ENCODE measurements at regions of chr1 and their contacts with region 1.

Region 1: GRCh38 chr1:58652651-58653184 is 47.1 kb downstream of the MYSM1 start:
- DNase-seq: peak; percentile 75
- H3K4me3 ChIP-seq: no peak overlapping the region
- H3K27ac ChIP-seq: no peak overlapping the region
- H3K4me1 ChIP-seq: peaks cover 3% of the 10 kb centered on the region
- H3K27me3 ChIP-seq: no peaks in the 10 kb centered on the region
- CTCF ChIP-seq: peak; percentile 76 to 81

Region 2: DNA sequence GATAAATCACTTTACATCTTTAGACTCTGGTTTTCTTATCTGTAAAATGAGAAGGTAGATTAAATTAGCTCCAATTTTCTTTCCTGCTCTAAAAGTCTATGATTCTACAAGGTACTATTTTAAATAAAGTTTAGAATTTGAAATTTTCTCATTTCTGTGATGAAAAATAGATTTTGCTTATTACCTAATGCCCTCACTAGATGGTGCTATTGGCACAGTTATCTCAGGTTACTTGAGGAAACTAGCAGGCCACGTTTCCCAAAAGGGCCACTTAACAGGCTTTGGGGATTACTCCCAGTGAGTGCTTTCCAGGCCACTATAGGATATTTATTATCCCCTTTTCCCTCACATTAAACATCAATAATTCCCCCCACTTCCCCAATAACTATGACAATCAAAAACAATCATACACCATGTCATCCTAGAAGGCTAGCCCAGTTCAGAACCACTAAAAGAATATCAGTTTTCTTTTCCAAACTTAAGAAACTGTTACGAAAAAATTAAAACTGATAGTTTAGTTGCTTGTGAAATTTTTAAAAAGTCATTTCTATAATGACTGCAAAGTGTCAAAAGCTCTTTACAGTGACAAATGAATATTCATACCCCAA is 136.8 kb before region 1 on chr1:
- CTCF ChIA-PET with region 1: interaction called, 5 read pairs
- dilution Hi-C with region 1: no loop called
- in situ Hi-C with region 1: loop called (anchors 5 kb)
- intact Hi-C with region 1: loop called (anchors 1 kb)
- DNase-seq: peak; percentile 51
- H3K4me3 ChIP-seq: no peak overlapping the region
- H3K27ac ChIP-seq: no peak overlapping the region
- H3K4me1 ChIP-seq: no peaks in the 10 kb centered on the region
- H3K27me3 ChIP-seq: no peaks in the 10 kb centered on the region
- CTCF ChIP-seq: peak; percentile 46 to 60

Region 3: DNA sequence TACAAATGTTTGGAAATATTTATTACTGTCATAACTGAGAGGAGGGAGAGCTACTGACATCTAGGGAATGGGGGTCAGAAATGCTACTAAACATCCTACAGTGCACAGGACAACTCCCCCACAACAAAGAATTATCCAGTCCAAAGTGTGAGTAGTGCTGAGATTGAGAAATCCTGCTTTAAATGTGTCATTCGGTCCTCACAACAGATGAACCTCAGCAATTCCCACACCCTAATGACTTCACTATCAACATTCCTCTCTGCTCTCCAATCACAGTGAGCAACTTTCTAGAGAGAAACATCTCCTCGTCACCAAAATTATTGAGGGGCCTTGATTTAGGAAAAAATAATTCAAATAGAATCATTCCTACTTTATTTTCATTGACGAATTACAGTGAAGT is 124.2 kb before region 1 on chr1:
- CTCF ChIA-PET with region 1: no interaction called
- dilution Hi-C with region 1: no loop called
- in situ Hi-C with region 1: loop called in 1 of 2 experiments (anchors 5 kb)
- intact Hi-C with region 1: no loop called
- DNase-seq: peak; percentile 67
- H3K4me3 ChIP-seq: no peak overlapping the region
- H3K27ac ChIP-seq: peak overlapping the region; percentile 11
- H3K4me1 ChIP-seq: peaks cover 5% of the 10 kb centered on the region
- H3K27me3 ChIP-seq: no peaks in the 10 kb centered on the region
- CTCF ChIP-seq: no peak

Region 4: DNA sequence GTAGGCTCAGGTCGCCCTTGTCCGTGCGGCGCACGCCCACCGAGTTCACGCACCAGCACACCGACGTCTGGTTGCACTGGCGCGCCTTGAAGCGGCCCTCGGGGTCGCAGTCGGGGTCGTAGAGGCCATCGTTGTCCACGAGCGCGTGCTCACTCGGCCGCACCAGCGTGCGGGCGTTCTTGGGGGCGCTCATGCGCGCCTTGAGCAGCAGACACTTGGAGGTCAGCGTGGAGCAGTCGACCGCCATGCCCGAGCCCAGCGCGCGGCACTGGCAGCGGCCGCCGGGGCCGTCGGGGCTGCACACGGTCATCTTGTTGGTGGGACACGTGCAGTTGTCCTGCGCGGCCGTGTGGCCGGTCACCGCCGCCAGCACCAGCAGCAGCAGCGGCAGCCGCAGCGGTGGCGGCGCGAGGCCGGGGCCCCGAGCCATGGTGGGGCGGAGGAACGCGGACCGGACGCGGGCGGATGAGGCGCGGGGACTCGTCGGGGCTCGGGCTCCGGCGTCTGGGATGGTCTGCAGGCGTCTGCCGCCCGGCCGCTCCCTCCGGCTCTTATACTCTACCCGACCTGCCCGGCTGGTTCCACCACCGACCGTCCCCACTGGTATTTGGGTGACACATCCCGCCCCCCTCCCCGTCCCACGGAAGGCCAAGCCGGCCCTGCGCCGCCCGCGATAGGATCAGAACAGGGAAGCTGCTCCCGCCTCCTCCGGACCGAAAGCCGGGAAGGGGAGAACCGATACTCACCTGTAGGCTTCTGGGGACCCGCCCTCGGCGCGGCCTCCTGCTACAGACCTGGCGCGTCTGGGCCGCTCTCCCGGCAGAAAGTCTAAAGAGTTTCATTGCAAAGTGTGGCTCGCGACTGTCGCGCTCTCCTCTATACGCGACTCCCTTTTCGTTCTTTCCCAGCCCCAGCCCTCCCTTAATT is 75.7 kb before region 1 on chr1 and contains the start of gene TACSTD2:
- CTCF ChIA-PET with region 1: no interaction called
- dilution Hi-C with region 1: no loop called
- in situ Hi-C with region 1: no loop called
- intact Hi-C with region 1: loop called (anchors 1 kb)
- DNase-seq: peak; percentile 99
- H3K4me3 ChIP-seq: peak within 1 kb of the TSS; percentile 65 to 93 (median 82)
- H3K27ac ChIP-seq: peak within 1 kb of the TSS; percentile 99
- H3K4me1 ChIP-seq: peaks cover 46% of the 10 kb centered on the region
- H3K27me3 ChIP-seq: no peaks in the 10 kb centered on the region
- CTCF ChIP-seq: no peak
- total RNA-seq, gene TACSTD2: 231 to 244 TPM

Region 5: DNA sequence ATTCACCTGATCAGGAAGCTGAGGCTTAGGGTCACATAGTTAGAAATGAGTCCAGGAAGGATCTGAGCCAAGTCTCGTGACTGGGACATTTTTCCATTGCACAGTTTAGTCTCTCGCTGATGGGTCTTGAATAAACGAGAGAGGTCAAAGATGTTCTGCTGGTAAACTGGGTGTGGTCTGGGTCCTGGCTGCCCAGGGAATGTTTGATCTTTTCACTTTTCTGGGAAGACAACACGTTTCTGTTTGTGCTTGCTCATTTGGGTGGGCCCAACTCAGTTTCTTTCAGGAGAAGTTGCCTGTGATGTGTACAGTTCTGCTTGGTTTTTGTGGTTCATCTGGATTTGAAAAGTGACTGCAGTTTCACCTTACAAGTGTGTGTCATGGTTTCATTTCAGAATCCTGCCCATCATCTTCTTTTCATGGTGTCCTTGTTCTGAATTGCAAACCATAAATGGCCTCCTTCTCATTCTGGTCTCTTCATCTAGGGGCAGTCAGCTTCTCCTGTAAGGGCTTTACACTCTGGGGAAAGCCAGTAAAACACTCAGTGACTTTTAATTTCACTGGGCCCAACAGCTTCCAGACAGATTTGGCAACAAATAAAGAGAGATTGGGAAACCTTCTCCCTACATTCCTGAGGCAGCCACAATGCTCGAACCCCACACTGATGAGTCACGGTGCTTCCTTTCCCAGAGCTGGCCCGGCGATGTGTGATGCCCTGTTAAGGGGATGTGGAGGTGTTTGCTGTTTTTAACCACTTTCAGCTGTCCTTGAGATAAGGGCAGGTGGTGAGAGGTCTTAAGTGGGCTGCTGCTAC is 68.4 kb before region 1 on chr1:
- CTCF ChIA-PET with region 1: no interaction called
- dilution Hi-C with region 1: no loop called
- in situ Hi-C with region 1: no loop called
- intact Hi-C with region 1: loop called (anchors 2 kb)
- DNase-seq: peak; percentile 98
- H3K4me3 ChIP-seq: peak overlapping the region in 2 of 3 experiments; percentile 12 to 14
- H3K27ac ChIP-seq: peak overlapping the region; percentile 97
- H3K4me1 ChIP-seq: peaks cover 38% of the 10 kb centered on the region
- H3K27me3 ChIP-seq: no peaks in the 10 kb centered on the region
- CTCF ChIP-seq: no peak

Region 6: GRCh38 chr1:58597076-58597475 is 55.6 kb before region 1 on chr1:
- CTCF ChIA-PET with region 1: no interaction called
- dilution Hi-C with region 1: no loop called
- in situ Hi-C with region 1: no loop called
- intact Hi-C with region 1: no loop called
- DNase-seq: no peak
- H3K4me3 ChIP-seq: no peak overlapping the region
- H3K27ac ChIP-seq: no peak overlapping the region
- H3K4me1 ChIP-seq: peaks cover 13% of the 10 kb centered on the region
- H3K27me3 ChIP-seq: no peaks in the 10 kb centered on the region
- CTCF ChIP-seq: no peak

Measured in mammary epithelial cell (primary cell).